IMR-90 (cell line): ENCODE measurements at regions of chr18 and their contacts with region 1.

Region 1: DNA sequence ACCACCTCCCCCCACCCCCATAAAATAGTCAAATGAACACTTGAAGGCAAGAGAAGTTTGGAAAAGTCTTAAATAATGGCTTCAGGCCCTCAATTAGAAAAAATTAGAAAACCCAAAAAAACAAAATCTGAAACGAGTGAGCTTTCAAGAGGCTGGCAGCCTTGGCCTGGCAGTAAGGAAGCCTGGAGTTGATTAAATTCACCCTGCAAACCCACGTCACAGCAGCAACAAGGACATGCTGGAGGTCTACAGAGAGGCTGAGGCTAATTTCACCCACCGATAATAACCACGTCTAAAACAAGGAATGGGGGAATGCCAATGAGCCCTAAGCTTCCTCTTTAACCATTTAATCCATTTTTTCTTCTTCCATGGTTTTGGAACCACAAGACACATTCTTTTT is 122.7 kb upstream of the SMAD7 start:
- DNase-seq: no peak
- ATAC-seq: no peak
- H3K4me3 ChIP-seq: no peak overlapping the region
- H3K27ac ChIP-seq: no peak overlapping the region
- H3K4me1 ChIP-seq: peaks cover 17% of the 10 kb centered on the region
- H3K27me3 ChIP-seq: no peaks in the 10 kb centered on the region
- CTCF ChIP-seq: no peak
- POLR2A ChIP-seq: no peak
- RAD21 ChIP-seq: no peak

Region 2: DNA sequence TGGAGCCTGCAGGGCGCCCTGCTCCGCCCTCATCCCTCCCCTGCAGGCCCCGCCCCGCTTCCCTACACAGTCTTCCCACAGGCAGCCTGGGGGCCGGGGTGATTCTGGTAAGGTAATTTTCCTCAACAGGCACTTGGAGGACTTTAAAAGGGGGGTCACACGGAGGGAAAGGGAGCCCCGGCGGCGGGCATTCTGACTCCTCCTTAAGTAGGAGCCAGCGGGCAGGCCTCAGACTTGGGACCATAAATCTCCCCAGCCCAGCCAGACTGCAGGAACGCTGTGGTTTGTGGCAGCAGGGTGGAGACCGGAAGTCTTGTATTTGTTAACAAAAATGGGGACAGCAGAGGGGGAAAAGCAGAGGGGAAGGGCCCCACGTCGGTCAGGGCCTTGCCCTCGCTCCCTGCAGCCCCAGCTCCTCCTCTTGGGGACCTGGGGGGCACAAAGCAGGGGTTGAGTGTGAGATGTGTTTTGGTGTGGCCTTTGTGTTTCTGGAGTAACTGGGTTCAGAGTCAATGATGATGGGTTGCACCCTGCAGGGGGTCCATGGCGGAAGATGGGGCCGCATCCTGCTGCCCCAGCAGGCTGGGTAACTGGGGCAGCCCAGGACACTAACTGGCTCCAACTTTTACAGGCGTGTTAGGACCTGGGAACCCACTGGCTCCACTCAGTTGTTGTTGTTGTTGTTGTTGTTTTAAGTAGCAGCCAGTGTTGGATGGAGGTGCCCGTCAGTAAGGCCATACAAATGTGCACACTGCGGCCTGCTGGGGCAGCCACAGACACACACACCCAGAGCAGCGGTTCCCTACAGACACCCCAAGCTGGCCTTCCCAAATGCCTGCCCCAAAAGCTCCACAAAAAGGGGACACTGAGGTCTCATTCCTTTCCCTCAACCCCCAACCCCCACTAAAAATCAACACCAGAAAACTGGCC is 150.4 kb before region 1 on chr18:
- CTCF ChIA-PET with region 1: no interaction called
- POLR2A ChIA-PET with region 1: interaction called, 10 read pairs
- dilution Hi-C with region 1: no loop called
- in situ Hi-C with region 1: no loop called
- intact Hi-C with region 1: no loop called
- DNase-seq: peak; percentile 82
- ATAC-seq: peak; percentile 75
- H3K4me3 ChIP-seq: no peak overlapping the region
- H3K27ac ChIP-seq: peak overlapping the region; percentile 93
- H3K4me1 ChIP-seq: peaks cover 47% of the 10 kb centered on the region
- H3K27me3 ChIP-seq: no peaks in the 10 kb centered on the region
- CTCF ChIP-seq: no peak
- POLR2A ChIP-seq: 0 out of 2 replicates have a peak, but pooled peaks have one; percentile 40
- RAD21 ChIP-seq: peak; percentile 14; the same call in 1 of the 2 replicates

Region 3: GRCh38 chr18:49151482-49151881 is 78.0 kb after region 1 on chr18:
- CTCF ChIA-PET with region 1: no interaction called
- POLR2A ChIA-PET with region 1: no interaction called
- dilution Hi-C with region 1: no loop called
- in situ Hi-C with region 1: no loop called
- intact Hi-C with region 1: no loop called
- DNase-seq: no peak
- ATAC-seq: no peak
- H3K4me3 ChIP-seq: no peak overlapping the region
- H3K27ac ChIP-seq: no peak overlapping the region
- H3K4me1 ChIP-seq: no peaks in the 10 kb centered on the region
- H3K27me3 ChIP-seq: no peaks in the 10 kb centered on the region
- CTCF ChIP-seq: no peak
- POLR2A ChIP-seq: no peak
- RAD21 ChIP-seq: no peak

Region 4: DNA sequence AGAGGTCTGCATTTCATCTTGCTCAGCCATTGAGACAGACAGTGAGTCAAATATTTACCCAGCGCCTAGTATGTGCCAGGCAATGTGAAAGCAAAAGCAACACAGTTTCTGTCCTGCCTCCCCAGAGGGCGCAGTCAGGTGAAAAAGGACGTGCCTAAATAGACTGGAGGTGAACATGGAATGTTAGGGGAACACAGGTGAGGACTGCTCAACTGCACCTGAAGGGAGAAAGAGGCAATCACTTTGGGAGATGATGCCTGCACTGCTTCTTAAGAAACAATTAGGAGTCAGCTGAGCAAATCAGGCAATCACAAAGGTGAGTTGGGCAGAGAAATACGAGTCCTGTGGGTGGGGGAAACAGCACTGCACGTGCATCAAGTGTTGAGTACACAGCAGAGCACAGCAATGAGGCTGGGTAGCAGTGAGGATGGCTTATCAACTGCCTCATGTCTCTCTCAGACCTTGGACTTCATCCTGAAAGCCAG is 95.6 kb after region 1 on chr18:
- CTCF ChIA-PET with region 1: no interaction called
- POLR2A ChIA-PET with region 1: no interaction called
- dilution Hi-C with region 1: no loop called
- in situ Hi-C with region 1: no loop called
- intact Hi-C with region 1: no loop called
- DNase-seq: no peak
- ATAC-seq: no peak
- H3K4me3 ChIP-seq: no peak overlapping the region
- H3K27ac ChIP-seq: no peak overlapping the region
- H3K4me1 ChIP-seq: no peaks in the 10 kb centered on the region
- H3K27me3 ChIP-seq: no peaks in the 10 kb centered on the region
- CTCF ChIP-seq: no peak
- POLR2A ChIP-seq: no peak
- RAD21 ChIP-seq: no peak